OCI-LY7 (cell line): ENCODE measurements at regions of chr11 and their contacts with region 1.

Region 1: GRCh38 chr11:13462901-13463778 is at the start of gene BTBD10:
- DNase-seq: peak; percentile 98
- H3K4me3 ChIP-seq: peak within 1 kb of the TSS; percentile 86
- H3K27ac ChIP-seq: peak within 1 kb of the TSS; percentile 55
- H3K4me1 ChIP-seq: peaks cover 22% of the 10 kb centered on the region
- CTCF ChIP-seq: 0 out of 2 replicates have a peak, but pooled peaks have one; percentile 1
- total RNA-seq, gene BTBD10: 23.7 and 25.0 TPM in 2 replicates

Region 2: DNA sequence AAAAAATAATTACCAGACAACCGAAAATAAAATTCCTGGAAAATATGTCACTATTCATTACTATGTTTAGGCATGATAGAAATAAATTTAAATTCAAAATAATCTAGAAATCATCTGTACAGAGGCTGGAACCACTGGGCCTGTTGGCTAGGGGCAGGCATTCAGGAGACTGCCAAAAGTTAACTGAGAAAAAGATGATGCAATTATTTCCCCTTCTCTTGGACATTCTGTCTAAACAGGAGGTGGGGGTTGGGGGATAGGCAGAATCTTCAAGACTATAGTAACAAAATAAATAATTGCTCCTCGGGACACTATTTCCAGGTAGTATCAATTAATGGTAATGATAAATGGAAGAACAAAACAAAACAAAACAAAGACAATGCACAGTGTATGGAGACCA is 14.3 kb before region 1 on chr11:
- CTCF ChIA-PET with region 1: no interaction called
- POLR2A ChIA-PET with region 1: interaction called, 20 read pairs
- intact Hi-C with region 1: no loop called
- DNase-seq: peak; percentile 4
- H3K4me3 ChIP-seq: no peak overlapping the region
- H3K27ac ChIP-seq: no peak overlapping the region
- H3K4me1 ChIP-seq: no peaks in the 10 kb centered on the region
- CTCF ChIP-seq: no peak

Region 3: DNA sequence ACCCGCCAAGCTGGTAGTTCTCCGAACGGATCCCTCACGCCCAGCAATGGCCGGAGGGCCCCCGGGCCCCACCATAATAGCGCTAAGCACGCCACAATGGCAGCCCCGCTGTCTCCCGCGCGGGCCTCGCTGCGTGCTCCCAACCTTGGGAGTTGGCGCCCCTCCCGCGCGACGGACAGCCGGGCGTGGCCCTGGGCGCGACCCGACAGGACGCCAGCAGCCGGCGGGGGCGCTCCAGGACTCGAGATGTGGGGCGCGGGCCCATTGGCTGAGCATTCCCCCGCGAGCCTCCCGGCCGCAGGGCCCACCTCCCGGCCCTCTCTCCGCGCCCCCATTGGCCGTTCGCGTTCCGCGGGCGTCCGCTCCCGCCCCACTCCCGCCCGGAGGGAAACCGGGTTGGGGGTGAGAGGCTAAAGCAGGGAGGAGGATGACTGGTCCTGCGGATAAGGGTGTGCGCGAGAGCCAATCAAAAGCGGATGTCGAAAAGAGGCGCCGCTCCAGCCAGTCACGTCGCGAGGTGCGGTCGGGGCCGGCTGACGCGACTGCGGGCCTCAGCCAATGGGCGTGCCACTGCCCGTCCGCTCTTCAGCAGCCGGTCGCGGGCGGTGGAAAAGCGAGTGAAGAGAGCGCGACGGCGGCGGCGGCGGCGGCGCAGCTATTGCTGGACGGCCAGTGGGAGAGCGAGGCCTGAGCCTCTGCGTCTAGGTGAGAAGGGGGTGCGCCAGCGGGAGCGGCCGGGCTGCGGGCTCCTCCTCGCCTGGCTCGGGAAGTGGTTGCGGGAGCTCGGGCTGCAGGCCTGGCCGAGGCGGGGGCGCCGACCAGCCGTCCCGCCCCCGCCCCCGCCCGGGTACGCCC is 205.2 kb after region 1 on chr11 and contains the start of gene FAR1:
- CTCF ChIA-PET with region 1: no interaction called
- POLR2A ChIA-PET with region 1: interaction called, 10 read pairs
- intact Hi-C with region 1: loop called (anchors 1 kb)
- DNase-seq: peak; percentile 98
- H3K4me3 ChIP-seq: peak within 1 kb of the TSS; percentile 93
- H3K27ac ChIP-seq: peak within 1 kb of the TSS; percentile 52
- H3K4me1 ChIP-seq: peaks cover 44% of the 10 kb centered on the region
- CTCF ChIP-seq: peak; percentile 74
- total RNA-seq, gene FAR1: 52.1 and 61.2 TPM in 2 replicates

Region 4: GRCh38 chr11:14075118-14076078 is 612.3 kb after region 1 on chr11:
- CTCF ChIA-PET with region 1: no interaction called
- POLR2A ChIA-PET with region 1: no interaction called
- intact Hi-C with region 1: loop called (anchors 10 kb)
- DNase-seq: no peak
- H3K4me3 ChIP-seq: no peak overlapping the region
- H3K27ac ChIP-seq: no peak overlapping the region
- H3K4me1 ChIP-seq: peaks cover 37% of the 10 kb centered on the region
- CTCF ChIP-seq: no peak